Tibial artery (tissue), 4 donors: ENCODE measurements at regions of chr6 and their contacts with region 1.

Region 1: GRCh38 chr6:52284460-52285176 is at the start of gene MCM3:
- DNase-seq: peak; percentile 98 to 99
- H3K4me3 ChIP-seq: peak within 1 kb of the TSS; percentile 69 to 88
- H3K27ac ChIP-seq: peak within 1 kb of the TSS; percentile 60 to 67
- H3K4me1 ChIP-seq: peaks cover 0 to 14% (median 8%) of the 10 kb centered on the region in 4 donors
- H3K27me3 ChIP-seq: no peaks in the 10 kb centered on the region
- CTCF ChIP-seq: peak; percentile 17 to 22

Region 2: DNA sequence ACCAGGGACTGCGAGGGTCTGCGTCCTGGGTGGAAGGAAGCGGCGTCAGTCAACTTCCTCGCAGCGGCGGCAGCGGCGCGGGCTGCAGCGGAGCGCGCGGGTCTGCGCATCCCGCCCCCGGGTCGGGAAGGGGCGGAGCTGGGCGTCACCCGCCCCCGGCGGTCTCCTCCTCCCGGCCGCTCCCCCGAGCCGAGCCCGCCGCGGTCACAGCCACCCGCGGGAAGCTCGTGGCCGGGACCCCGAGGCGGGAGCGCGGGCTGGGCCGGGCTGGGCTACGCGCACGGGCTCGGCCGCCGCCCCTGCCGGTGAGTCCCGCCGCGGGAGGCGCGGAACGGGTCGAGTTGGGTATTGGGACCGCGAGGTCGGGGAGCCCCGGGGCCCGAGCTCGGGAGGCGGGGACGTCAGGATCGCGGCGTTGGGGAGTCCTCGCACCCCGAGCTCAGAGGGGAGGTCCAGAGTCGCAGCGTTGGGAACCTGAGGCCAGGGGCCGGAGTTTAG is 77.4 kb after region 1 on chr6 and contains the start of gene PAQR8:
- intact Hi-C with region 1: loop called (anchors 5 kb)
- DNase-seq: peak; percentile 52 to 86
- H3K4me3 ChIP-seq: peak within 1 kb of the TSS; percentile 77
- H3K27ac ChIP-seq: peak within 1 kb of the TSS; percentile 61 to 64
- H3K4me1 ChIP-seq: peaks cover 0 to 12% (median 5%) of the 10 kb centered on the region in 4 donors
- H3K27me3 ChIP-seq: no peaks in the 10 kb centered on the region
- CTCF ChIP-seq: no peak

Region 3: GRCh38 chr6:52399511-52400312 is 115.1 kb after region 1 on chr6:
- intact Hi-C with region 1: loop called (anchors 5 kb)
- DNase-seq: no peak
- H3K4me3 ChIP-seq: no peak overlapping the region
- H3K27ac ChIP-seq: no peak overlapping the region
- H3K4me1 ChIP-seq: no peaks in the 10 kb centered on the region
- H3K27me3 ChIP-seq: no peaks in the 10 kb centered on the region
- CTCF ChIP-seq: peak; percentile 63 to 72

Region 4: GRCh38 chr6:52598123-52598823 is 313.7 kb after region 1 on chr6:
- intact Hi-C with region 1: loop called (anchors 10 kb)
- DNase-seq: peak; percentile 66 to 76
- H3K4me3 ChIP-seq: peak overlapping the region in 1 of 2 donors; percentile 23
- H3K27ac ChIP-seq: peak overlapping the region; percentile 80 to 85
- H3K4me1 ChIP-seq: peaks cover 0 to 49% (median 37%) of the 10 kb centered on the region in 4 donors
- H3K27me3 ChIP-seq: no peaks in the 10 kb centered on the region
- CTCF ChIP-seq: peak; percentile 73 to 82

Region 5: GRCh38 chr6:53020005-53020744 is 735.6 kb after region 1 on chr6:
- intact Hi-C with region 1: no loop called
- DNase-seq: no peak
- H3K4me3 ChIP-seq: no peak overlapping the region
- H3K27ac ChIP-seq: no peak overlapping the region
- H3K4me1 ChIP-seq: peaks cover 0 to 3% (median 2%) of the 10 kb centered on the region in 4 donors
- H3K27me3 ChIP-seq: no peaks in the 10 kb centered on the region
- CTCF ChIP-seq: no peak